AG04450 (cell line): ENCODE measurements at regions of chr20 and their contacts with region 1.

Region 1: DNA sequence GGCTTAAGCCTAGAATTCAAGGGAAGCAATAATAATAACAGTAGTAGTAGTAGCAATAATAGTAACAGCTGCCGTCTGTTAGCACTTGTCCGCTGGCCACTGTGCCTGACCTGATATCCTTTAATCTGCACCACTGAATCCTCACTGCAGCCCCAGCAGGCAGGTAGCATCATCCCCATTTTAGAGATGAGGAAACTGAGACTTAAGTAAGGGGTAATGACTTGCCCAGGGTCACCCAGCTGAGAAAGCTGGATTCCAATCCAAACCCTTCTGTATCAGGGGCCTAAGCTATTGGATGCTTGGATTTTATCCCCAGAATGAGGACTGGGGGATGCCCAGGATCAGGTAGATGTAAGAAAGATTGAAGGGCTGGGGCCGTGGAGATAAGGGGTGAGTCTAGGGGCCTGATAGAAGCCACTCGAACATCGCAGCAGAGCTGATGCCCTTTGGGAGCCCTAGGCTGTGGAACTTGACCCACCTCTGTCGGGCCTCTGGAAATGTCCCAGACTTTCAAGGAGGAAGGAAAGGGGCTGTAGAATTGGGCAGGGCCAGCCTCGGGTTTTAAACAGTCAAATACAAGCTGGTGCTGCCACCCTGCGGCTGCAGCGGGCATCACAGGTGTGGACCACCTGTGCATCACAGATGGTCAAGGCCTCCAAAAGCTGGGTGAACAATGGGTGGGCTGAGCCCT is 102.1 kb upstream of the MYL9 start:
- DNase-seq: no peak
- H3K4me3 ChIP-seq: no peak overlapping the region
- H3K27ac ChIP-seq: no peak overlapping the region
- H3K27me3 ChIP-seq: peaks cover 37% of the 10 kb centered on the region
- CTCF ChIP-seq: peak; percentile 84

Region 2: GRCh38 chr20:36214684-36215256 is 224.4 kb before region 1 on chr20:
- CTCF ChIA-PET with region 1: interaction called, 20 read pairs
- POLR2A ChIA-PET with region 1: no interaction called
- DNase-seq: peak; percentile 4
- H3K4me3 ChIP-seq: no peak overlapping the region
- H3K27ac ChIP-seq: no peak overlapping the region
- H3K27me3 ChIP-seq: no peaks in the 10 kb centered on the region
- CTCF ChIP-seq: peak; percentile 80

Region 3: GRCh38 chr20:36632487-36633284 is 193.5 kb after region 1 on chr20:
- CTCF ChIA-PET with region 1: no interaction called
- POLR2A ChIA-PET with region 1: no interaction called
- DNase-seq: no peak
- H3K4me3 ChIP-seq: no peak overlapping the region
- H3K27ac ChIP-seq: no peak overlapping the region
- H3K27me3 ChIP-seq: peaks cover 5% of the 10 kb centered on the region
- CTCF ChIP-seq: no peak